Mammary epithelial cell (primary cell): ENCODE measurements at regions of chr3 and their contacts with region 1.

Region 1: DNA sequence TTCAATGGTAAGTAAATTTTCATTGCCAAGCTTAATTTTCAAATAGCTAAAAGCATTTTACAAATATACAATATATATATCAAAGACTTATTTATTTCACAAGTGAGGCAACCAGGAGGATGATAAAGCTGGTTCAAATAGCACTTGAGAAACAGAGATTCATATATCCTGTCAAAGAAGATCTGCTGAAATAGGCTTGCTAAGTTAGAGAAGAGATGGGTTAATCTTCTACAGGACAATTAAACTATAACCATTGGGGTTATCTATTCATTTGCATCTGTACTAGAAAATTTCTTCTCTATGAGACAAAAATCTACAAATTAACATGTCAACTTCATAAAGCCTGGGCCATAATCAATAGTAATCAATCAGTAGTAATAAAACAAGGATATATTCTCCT is 637.7 kb upstream of the UBE2E2 start:
- DNase-seq: no peak
- H3K4me3 ChIP-seq: no peak overlapping the region
- H3K27ac ChIP-seq: no peak overlapping the region
- H3K4me1 ChIP-seq: peaks cover 4% of the 10 kb centered on the region
- H3K27me3 ChIP-seq: no peaks in the 10 kb centered on the region
- CTCF ChIP-seq: no peak

Region 2: GRCh38 chr3:22659651-22660475 is 94.5 kb after region 1 on chr3:
- CTCF ChIA-PET with region 1: no interaction called
- dilution Hi-C with region 1: no loop called
- in situ Hi-C with region 1: loop called in 1 of 2 experiments (anchors 10 kb)
- intact Hi-C with region 1: no loop called
- DNase-seq: peak; percentile 23
- H3K4me3 ChIP-seq: no peak overlapping the region
- H3K27ac ChIP-seq: no peak overlapping the region
- H3K4me1 ChIP-seq: no peaks in the 10 kb centered on the region
- H3K27me3 ChIP-seq: no peaks in the 10 kb centered on the region
- CTCF ChIP-seq: no peak

Region 3: GRCh38 chr3:22671848-22672247 is 106.5 kb after region 1 on chr3:
- CTCF ChIA-PET with region 1: no interaction called
- dilution Hi-C with region 1: no loop called
- in situ Hi-C with region 1: loop called in 1 of 2 experiments (anchors 10 kb)
- intact Hi-C with region 1: loop called (anchors 1 kb)
- DNase-seq: no peak
- H3K4me3 ChIP-seq: no peak overlapping the region
- H3K27ac ChIP-seq: no peak overlapping the region
- H3K4me1 ChIP-seq: no peaks in the 10 kb centered on the region
- H3K27me3 ChIP-seq: no peaks in the 10 kb centered on the region
- CTCF ChIP-seq: peak; percentile 4 to 18

Region 4: DNA sequence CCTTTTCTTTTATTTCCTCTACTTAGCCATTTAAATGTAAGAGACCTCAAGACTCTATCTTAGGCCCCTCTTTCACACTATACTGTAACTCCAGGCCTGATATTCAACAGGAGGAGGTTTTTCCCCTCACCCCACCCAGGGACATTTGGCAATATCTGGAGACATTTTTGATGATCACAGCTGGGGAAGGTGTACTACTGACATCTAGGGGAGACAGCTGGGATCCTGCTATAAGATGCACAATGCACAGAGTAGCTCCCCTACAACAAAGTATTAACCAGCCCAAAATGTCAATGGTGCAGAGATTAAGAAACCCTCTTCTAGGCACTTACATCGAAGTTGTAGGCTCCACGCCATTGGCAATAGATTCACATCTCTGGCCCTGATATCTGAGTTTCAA is 120.2 kb after region 1 on chr3:
- CTCF ChIA-PET with region 1: no interaction called
- dilution Hi-C with region 1: no loop called
- in situ Hi-C with region 1: no loop called
- intact Hi-C with region 1: loop called (anchors 1 kb)
- DNase-seq: peak; percentile 34
- H3K4me3 ChIP-seq: no peak overlapping the region
- H3K27ac ChIP-seq: no peak overlapping the region
- H3K4me1 ChIP-seq: no peaks in the 10 kb centered on the region
- H3K27me3 ChIP-seq: no peaks in the 10 kb centered on the region
- CTCF ChIP-seq: peak; percentile 61 to 80

Region 5: DNA sequence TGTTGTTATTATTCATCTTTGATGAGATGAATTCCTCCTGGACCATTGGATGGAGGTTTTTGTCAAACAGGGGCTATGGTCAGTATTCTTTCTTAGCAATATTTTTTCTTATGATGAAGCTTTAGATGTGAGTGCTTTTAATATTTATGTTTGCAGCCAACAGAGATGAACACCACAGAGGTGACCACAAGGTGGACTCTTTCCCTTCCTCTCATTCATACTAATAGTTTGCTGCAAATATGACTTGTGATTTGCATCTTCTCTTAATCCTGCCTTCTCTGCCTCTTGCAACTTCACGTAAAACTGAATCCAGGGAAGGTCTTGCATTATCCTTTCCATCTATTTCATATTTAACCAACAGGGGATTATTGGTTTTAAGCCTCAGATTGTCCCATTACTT is 164.6 kb after region 1 on chr3:
- CTCF ChIA-PET with region 1: no interaction called
- dilution Hi-C with region 1: no loop called
- in situ Hi-C with region 1: no loop called
- intact Hi-C with region 1: no loop called
- DNase-seq: peak; percentile 2
- H3K4me3 ChIP-seq: no peak overlapping the region
- H3K27ac ChIP-seq: no peak overlapping the region
- H3K4me1 ChIP-seq: peaks cover 11% of the 10 kb centered on the region
- H3K27me3 ChIP-seq: no peaks in the 10 kb centered on the region
- CTCF ChIP-seq: peak; percentile 23 to 59

Region 6: GRCh38 chr3:22887664-22888291 is 322.4 kb after region 1 on chr3:
- CTCF ChIA-PET with region 1: no interaction called
- dilution Hi-C with region 1: no loop called
- in situ Hi-C with region 1: loop called (anchors 10 to 25 kb)
- intact Hi-C with region 1: loop called (anchors 1 kb)
- DNase-seq: peak; percentile 8
- H3K4me3 ChIP-seq: no peak overlapping the region
- H3K27ac ChIP-seq: no peak overlapping the region
- H3K4me1 ChIP-seq: no peaks in the 10 kb centered on the region
- H3K27me3 ChIP-seq: no peaks in the 10 kb centered on the region
- CTCF ChIP-seq: peak; percentile 73 to 81

Region 7: DNA sequence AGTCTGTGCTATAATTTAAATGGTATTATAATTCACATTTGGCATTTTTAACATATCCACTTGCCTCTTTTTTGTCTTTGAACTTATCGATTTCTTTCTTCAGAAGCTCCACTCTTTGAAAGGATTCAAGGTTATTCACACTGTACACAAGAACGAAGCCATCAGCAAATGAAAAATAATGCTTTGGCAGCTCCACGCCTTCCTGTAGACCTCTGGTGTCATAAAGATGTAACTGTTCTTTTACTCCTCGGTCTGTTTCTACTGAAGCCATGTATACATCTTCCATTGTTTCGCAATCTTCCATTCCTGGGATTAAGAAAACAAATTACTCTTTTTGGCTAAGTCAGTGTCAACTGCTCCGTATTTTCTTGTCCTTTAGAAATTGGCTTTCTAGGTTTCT is 1335.4 kb after region 1 on chr3:
- CTCF ChIA-PET with region 1: no interaction called
- dilution Hi-C with region 1: no loop called
- in situ Hi-C with region 1: no loop called
- intact Hi-C with region 1: no loop called
- DNase-seq: no peak
- H3K4me3 ChIP-seq: no peak overlapping the region
- H3K27ac ChIP-seq: no peak overlapping the region
- H3K4me1 ChIP-seq: no peaks in the 10 kb centered on the region
- H3K27me3 ChIP-seq: no peaks in the 10 kb centered on the region
- CTCF ChIP-seq: no peak